ENCODE measurements at regions of chr11 and their contacts with region 1.

Region 1: GRCh38 chr11:111446404-111447111 is 65.6 kb downstream of the BTG4 start:
- DNase-seq: peak; percentile 35 to 91 (median 81)
- ATAC-seq: peak; percentile 99
- H3K4me3 ChIP-seq: no peak overlapping the region
- H3K4me3 Mint-ChIP-seq: peak overlapping the region in 8 of 10 donors; percentile 11 to 68 (median 50)
- H3K27ac ChIP-seq: no peak overlapping the region
- H3K27ac Mint-ChIP-seq: peak overlapping the region; percentile 34 to 93 (median 82)
- H3K4me1 ChIP-seq: peaks cover 7 to 13% of the 10 kb centered on the region in 2 donors
- H3K4me1 Mint-ChIP-seq: peaks cover 15 to 21% (median 17%) of the 10 kb centered on the region in 7 donors
- H3K27me3 ChIP-seq: no peaks in the 10 kb centered on the region
- H3K27me3 Mint-ChIP-seq: peaks cover 0 to 9% (median 0%) of the 10 kb centered on the region in 5 donors

Region 2: GRCh38 chr11:110199184-110199941 is 1247.2 kb before region 1 on chr11:
- CTCF ChIA-PET with region 1: interaction called, 3 read pairs
- POLR2A ChIA-PET with region 1: no interaction called
- intact Hi-C with region 1: loop called in 1 of 2 experiments (anchors 1 kb)
- DNase-seq: no peak
- ATAC-seq: no peak
- H3K4me3 ChIP-seq: no peak overlapping the region
- H3K4me3 Mint-ChIP-seq: no peak overlapping the region
- H3K27ac ChIP-seq: no peak overlapping the region
- H3K27ac Mint-ChIP-seq: no peak overlapping the region
- H3K4me1 ChIP-seq: no peaks in the 10 kb centered on the region
- H3K4me1 Mint-ChIP-seq: peaks cover 0 to 4% (median 0%) of the 10 kb centered on the region in 7 donors
- H3K27me3 ChIP-seq: no peaks in the 10 kb centered on the region
- H3K27me3 Mint-ChIP-seq: peaks cover 0 to 9% (median 2%) of the 10 kb centered on the region in 5 donors

Region 3: GRCh38 chr11:110447897-110448745 is 998.4 kb before region 1 on chr11:
- CTCF ChIA-PET with region 1: interaction called, 3 read pairs
- POLR2A ChIA-PET with region 1: no interaction called
- intact Hi-C with region 1: loop called in 1 of 2 experiments (anchors 5 kb)
- DNase-seq: peak in 3 of 9 donors; percentile 29 to 34 (median 31)
- ATAC-seq: peak; percentile 36
- H3K4me3 ChIP-seq: no peak overlapping the region
- H3K4me3 Mint-ChIP-seq: no peak overlapping the region
- H3K27ac ChIP-seq: no peak overlapping the region
- H3K27ac Mint-ChIP-seq: no peak overlapping the region
- H3K4me1 ChIP-seq: no peaks in the 10 kb centered on the region
- H3K4me1 Mint-ChIP-seq: peaks cover 22 to 37% (median 33%) of the 10 kb centered on the region in 7 donors
- H3K27me3 ChIP-seq: no peaks in the 10 kb centered on the region
- H3K27me3 Mint-ChIP-seq: no peaks in the 10 kb centered on the region

Region 4: GRCh38 chr11:111283945-111284481 is 162.5 kb before region 1 on chr11:
- CTCF ChIA-PET with region 1: interaction called, 39 read pairs
- POLR2A ChIA-PET with region 1: no interaction called
- intact Hi-C with region 1: loop called (anchors 1 kb)
- DNase-seq: no peak
- ATAC-seq: peak; percentile 6
- H3K4me3 ChIP-seq: no peak overlapping the region
- H3K4me3 Mint-ChIP-seq: no peak overlapping the region
- H3K27ac ChIP-seq: no peak overlapping the region
- H3K27ac Mint-ChIP-seq: no peak overlapping the region
- H3K4me1 ChIP-seq: no peaks in the 10 kb centered on the region
- H3K4me1 Mint-ChIP-seq: peaks cover 0 to 3% (median 0%) of the 10 kb centered on the region in 7 donors
- H3K27me3 ChIP-seq: no peaks in the 10 kb centered on the region
- H3K27me3 Mint-ChIP-seq: peaks cover 0 to 14% (median 0%) of the 10 kb centered on the region in 5 donors

Region 5: DNA sequence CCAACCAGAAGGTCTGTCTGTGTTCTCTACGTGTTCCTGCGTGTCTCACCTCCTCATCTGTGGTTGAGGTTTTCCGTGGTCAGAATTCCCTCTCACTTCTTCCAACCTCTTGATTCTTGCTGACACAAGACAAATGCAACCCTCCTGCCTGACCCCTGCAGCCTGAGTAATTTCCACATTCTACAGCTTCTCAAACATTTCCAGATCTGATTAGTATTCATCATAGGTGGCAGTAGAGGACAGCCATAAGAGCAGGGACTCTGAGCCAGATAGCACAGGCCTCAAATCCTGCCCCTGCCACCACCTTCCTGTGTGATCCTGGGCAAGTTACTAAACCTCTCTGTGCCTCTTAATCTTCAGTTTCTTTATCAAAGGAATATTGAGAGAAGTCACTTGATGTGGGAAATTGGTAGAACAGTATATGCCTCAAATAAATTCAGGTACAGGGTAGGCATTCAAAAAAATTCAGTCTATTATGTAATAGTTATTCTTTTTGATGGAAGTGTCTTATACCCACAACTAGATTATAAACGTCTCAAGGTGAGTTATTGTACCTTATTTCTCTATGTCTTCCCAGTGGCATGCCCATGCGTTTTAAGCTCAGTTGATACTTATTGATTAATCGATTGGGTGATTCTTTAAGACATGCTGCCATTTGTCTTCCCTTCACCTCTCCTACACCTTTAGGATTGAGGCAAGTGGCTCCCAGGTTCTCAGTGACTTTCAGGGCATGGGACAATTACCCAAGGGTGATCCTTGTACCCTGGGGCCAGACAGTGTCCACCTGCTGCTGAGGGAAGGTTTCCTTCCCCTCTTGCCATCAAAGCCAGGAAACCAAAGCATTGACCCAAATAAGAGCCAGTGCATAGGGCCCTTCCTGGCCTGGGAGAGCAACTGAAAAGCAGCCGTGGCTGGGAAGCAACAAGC is 87.1 kb before region 1 on chr11:
- CTCF ChIA-PET with region 1: no interaction called
- POLR2A ChIA-PET with region 1: no interaction called
- intact Hi-C with region 1: loop called in 1 of 2 experiments (anchors 1 kb)
- DNase-seq: no peak
- ATAC-seq: no peak
- H3K4me3 ChIP-seq: no peak overlapping the region
- H3K4me3 Mint-ChIP-seq: no peak overlapping the region
- H3K27ac ChIP-seq: no peak overlapping the region
- H3K27ac Mint-ChIP-seq: no peak overlapping the region
- H3K4me1 ChIP-seq: no peaks in the 10 kb centered on the region
- H3K4me1 Mint-ChIP-seq: peaks cover 0 to 6% (median 0%) of the 10 kb centered on the region in 7 donors
- H3K27me3 ChIP-seq: no peaks in the 10 kb centered on the region
- H3K27me3 Mint-ChIP-seq: no peaks in the 10 kb centered on the region

Region 6: GRCh38 chr11:111409915-111410314 is 36.6 kb before region 1 on chr11:
- CTCF ChIA-PET with region 1: no interaction called
- POLR2A ChIA-PET with region 1: no interaction called
- intact Hi-C with region 1: loop called in 1 of 2 experiments (anchors 2 kb)
- DNase-seq: no peak
- ATAC-seq: peak; percentile 46
- H3K4me3 ChIP-seq: no peak overlapping the region
- H3K4me3 Mint-ChIP-seq: no peak overlapping the region
- H3K27ac ChIP-seq: no peak overlapping the region
- H3K27ac Mint-ChIP-seq: no peak overlapping the region
- H3K4me1 ChIP-seq: peaks cover 0 to 8% of the 10 kb centered on the region in 2 donors
- H3K4me1 Mint-ChIP-seq: peaks cover 6 to 32% (median 14%) of the 10 kb centered on the region in 7 donors
- H3K27me3 ChIP-seq: no peaks in the 10 kb centered on the region
- H3K27me3 Mint-ChIP-seq: no peaks in the 10 kb centered on the region

Region 7: GRCh38 chr11:111429066-111429506 is 17.5 kb before region 1 on chr11:
- CTCF ChIA-PET with region 1: interaction called, 7 read pairs
- POLR2A ChIA-PET with region 1: no interaction called
- intact Hi-C with region 1: loop called (anchors 2 kb)
- DNase-seq: peak in 7 of 9 donors; percentile 17 to 66 (median 40)
- ATAC-seq: peak; percentile 53
- H3K4me3 ChIP-seq: no peak overlapping the region
- H3K4me3 Mint-ChIP-seq: no peak overlapping the region
- H3K27ac ChIP-seq: no peak overlapping the region
- H3K27ac Mint-ChIP-seq: no peak overlapping the region
- H3K4me1 ChIP-seq: no peaks in the 10 kb centered on the region
- H3K4me1 Mint-ChIP-seq: peaks cover 0 to 2% (median 0%) of the 10 kb centered on the region in 7 donors
- H3K27me3 ChIP-seq: no peaks in the 10 kb centered on the region
- H3K27me3 Mint-ChIP-seq: peaks cover 0 to 9% (median 0%) of the 10 kb centered on the region in 5 donors